CD14-positive monocyte (primary cell): ENCODE measurements at regions of chr6 and their contacts with region 1.

Region 1: DNA sequence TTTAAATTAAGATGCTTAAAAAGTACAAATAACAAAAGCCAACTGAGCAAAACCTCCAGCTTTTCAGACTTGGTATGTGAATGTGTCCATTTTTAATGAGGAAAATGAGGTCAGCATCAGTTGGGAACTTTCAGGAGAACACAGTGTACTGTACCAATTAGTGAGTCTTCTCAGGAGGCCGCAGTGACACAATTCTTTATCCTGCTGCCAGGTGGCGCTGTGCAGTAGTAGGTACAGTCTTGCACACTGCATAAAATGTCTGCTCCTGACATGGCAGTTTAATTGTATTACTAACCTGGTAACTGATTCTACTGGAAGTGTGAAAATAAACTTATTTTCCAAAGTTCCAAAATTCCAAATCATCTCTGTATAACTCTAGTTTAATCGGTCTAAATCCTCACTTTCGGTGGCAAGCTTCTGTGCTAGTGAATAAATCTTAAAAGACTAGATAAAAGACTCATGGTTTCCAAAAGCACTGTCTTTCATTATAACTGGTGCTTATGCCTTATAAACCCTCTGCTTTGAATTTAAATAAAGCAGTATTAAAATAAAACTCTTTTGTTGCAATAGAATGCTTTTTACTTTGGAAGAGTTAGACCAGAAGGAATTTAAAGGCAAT is 214.8 kb upstream of the MMS22L start:
- DNase-seq: peak; percentile 1 to 34 (median 13)
- H3K4me3 ChIP-seq: no peak overlapping the region
- H3K4me3 Mint-ChIP-seq: no peak overlapping the region
- H3K27ac ChIP-seq: no peak overlapping the region
- H3K27ac Mint-ChIP-seq: no peak overlapping the region
- H3K4me1 ChIP-seq: no peaks in the 10 kb centered on the region
- H3K4me1 Mint-ChIP-seq: no peaks in the 10 kb centered on the region
- H3K27me3 ChIP-seq: peaks cover 0 to 6% of the 10 kb centered on the region in 2 donors
- H3K27me3 Mint-ChIP-seq: peaks cover 2 to 3% (median 3%) of the 10 kb centered on the region in 3 donors
- CTCF ChIP-seq: peak; percentile 80

Region 2: GRCh38 chr6:98834060-98835031 is 1336.5 kb after region 1 on chr6 and contains the start of gene POU3F2:
- intact Hi-C with region 1: loop called in 1 of 2 experiments (anchors 5 kb)
- DNase-seq: peak; percentile 36 to 58 (median 38)
- H3K4me3 ChIP-seq: peak within 1 kb of the TSS; percentile 47 to 76 (median 51)
- H3K4me3 Mint-ChIP-seq: peak within 1 kb of the TSS; percentile 89 to 98
- H3K27ac ChIP-seq: no peak within 1 kb of the TSS
- H3K27ac Mint-ChIP-seq: peak within 1 kb of the TSS in 1 of 7 donors; percentile 42
- H3K4me1 ChIP-seq: peaks cover 28 to 38% of the 10 kb centered on the region in 2 donors
- H3K4me1 Mint-ChIP-seq: peaks cover 39% of the 10 kb centered on the region
- H3K27me3 ChIP-seq: peaks cover 85 to 98% of the 10 kb centered on the region in 2 donors
- H3K27me3 Mint-ChIP-seq: peaks cover 91 to 96% (median 93%) of the 10 kb centered on the region in 3 donors
- CTCF ChIP-seq: no peak
- polyA plus RNA-seq, gene POU3F2: not detected

Region 3: DNA sequence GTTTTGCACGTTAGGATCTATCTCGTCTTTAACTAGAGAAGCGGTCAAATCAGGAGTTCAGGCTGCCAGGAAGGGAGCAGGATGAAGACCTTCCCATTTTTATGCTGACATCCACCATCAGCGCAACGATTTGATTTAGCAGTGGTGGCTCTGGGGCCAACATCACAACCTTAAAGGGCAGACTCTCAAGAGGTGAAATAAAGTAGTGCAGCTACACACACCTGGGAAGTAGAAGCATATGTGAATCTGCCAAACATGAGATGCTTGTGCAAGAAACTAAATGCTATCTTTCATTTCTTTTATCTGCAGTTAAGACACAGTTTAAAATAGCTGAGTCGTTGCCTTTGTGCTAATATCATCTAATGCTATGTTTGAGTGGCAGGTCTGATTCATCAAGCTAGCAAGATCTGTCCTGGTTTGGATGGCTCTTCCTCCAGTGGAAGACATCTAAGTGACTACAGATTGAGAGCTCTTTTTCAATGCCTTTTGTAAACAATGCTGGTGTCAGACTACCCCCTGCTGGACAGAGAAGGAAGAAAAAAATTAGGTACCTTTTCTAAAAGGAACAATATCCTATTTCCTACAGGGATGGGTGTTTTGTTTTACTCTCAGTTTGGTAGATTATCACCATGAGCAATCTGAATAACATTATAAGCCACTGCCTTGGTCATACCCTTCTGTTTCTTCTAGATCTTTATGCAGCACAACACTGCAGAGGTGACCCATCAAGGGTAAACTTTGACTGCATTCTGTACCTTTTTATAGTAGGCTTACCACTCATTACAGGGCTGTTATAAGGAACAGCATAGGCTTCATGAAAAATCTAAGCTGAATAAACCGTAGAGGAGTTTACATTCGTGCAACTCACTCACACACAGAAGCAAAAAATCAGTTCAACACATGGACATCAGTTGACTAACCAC is 1621.5 kb after region 1 on chr6:
- intact Hi-C with region 1: loop called in 1 of 2 experiments (anchors 5 kb)
- DNase-seq: peak in 1 of 3 donors; percentile 4
- H3K4me3 ChIP-seq: no peak overlapping the region
- H3K4me3 Mint-ChIP-seq: no peak overlapping the region
- H3K27ac ChIP-seq: no peak overlapping the region
- H3K27ac Mint-ChIP-seq: no peak overlapping the region
- H3K4me1 ChIP-seq: no peaks in the 10 kb centered on the region
- H3K4me1 Mint-ChIP-seq: no peaks in the 10 kb centered on the region
- H3K27me3 ChIP-seq: peaks cover 0 to 2% of the 10 kb centered on the region in 2 donors
- H3K27me3 Mint-ChIP-seq: peaks cover 1 to 8% (median 6%) of the 10 kb centered on the region in 3 donors
- CTCF ChIP-seq: peak; percentile 72